ENCODE measurements at regions of chr1 and their contacts with region 1.

Region 1: DNA sequence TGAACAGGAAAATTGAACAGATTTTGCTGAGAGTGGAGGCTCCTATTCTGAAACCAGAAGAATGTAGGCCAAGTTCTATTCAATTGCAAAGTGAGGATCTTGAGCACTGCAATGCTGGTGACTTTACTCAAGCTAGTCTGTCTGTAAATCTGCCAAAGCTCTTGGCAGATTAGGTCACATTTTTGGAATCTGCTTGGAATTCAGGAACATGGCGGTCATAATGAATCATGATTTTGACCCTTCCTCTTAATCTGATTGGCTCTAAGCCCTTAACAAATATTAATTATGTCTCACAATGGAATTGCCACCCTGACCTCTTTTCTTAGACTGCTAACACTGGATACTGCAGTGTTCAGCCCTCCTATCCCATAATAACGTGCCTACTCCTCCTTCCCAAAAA is 7.2 kb upstream of the GNG12 start:
- DNase-seq: no peak
- ATAC-seq: 0 out of 2 replicates have a peak, but pooled peaks have one; percentile 36
- H3K4me3 ChIP-seq: no peak overlapping the region
- H3K27ac ChIP-seq: no peak overlapping the region
- H3K4me1 ChIP-seq: no peaks in the 10 kb centered on the region; the same call in 1 of the 2 replicates
- H3K27me3 ChIP-seq: no peaks in the 10 kb centered on the region
- CTCF ChIP-seq: no peak

Region 2: DNA sequence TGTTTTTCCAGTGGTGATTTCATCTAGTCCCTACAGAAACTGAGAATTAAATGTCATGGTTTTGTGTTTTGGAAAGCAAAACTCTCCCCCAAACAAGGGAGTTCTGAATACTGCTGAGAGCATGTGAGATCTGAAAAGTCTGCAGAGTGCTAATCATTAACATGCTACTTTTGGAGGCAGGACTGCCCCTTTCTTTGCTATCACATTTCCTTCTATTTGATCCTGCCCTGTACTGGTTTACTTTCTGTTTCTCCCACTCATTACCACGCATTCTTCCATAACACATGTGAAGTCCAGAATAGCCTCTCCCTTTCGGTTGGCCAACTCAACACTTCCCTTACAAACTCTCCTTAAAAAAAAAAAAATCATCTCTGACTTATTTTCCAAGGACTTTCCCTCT is 91.8 kb before region 1 on chr1:
- CTCF ChIA-PET with region 1: no interaction called
- POLR2A ChIA-PET with region 1: no interaction called
- in situ Hi-C with region 1: no loop called
- intact Hi-C with region 1: no loop called
- DNase-seq: no peak
- ATAC-seq: peak; percentile 43; the same call in 1 of the 2 replicates
- H3K4me3 ChIP-seq: no peak overlapping the region
- H3K27ac ChIP-seq: peak overlapping the region; percentile 88
- H3K4me1 ChIP-seq: peaks cover 52% of the 10 kb centered on the region
- H3K27me3 ChIP-seq: no peaks in the 10 kb centered on the region
- CTCF ChIP-seq: no peak

Region 3: GRCh38 chr1:67785847-67786753 is 54.3 kb before region 1 on chr1:
- CTCF ChIA-PET with region 1: no interaction called
- POLR2A ChIA-PET with region 1: no interaction called
- in situ Hi-C with region 1: no loop called
- intact Hi-C with region 1: no loop called
- DNase-seq: no peak
- ATAC-seq: no peak
- H3K4me3 ChIP-seq: no peak overlapping the region
- H3K27ac ChIP-seq: no peak overlapping the region
- H3K4me1 ChIP-seq: peaks cover under 1% of the 10 kb centered on the region
- H3K27me3 ChIP-seq: no peaks in the 10 kb centered on the region
- CTCF ChIP-seq: no peak

Region 4: GRCh38 chr1:68049941-68050878 is 209.8 kb after region 1 on chr1 and contains the start of gene DIRAS3:
- CTCF ChIA-PET with region 1: interaction called, 12 read pairs
- POLR2A ChIA-PET with region 1: no interaction called
- in situ Hi-C with region 1: no loop called
- intact Hi-C with region 1: no loop called
- DNase-seq: no peak
- ATAC-seq: no peak
- H3K4me3 ChIP-seq: peak within 1 kb of the TSS in 1 of 2 experiments; percentile 13; a peak in 1 of 4 replicates
- H3K27ac ChIP-seq: no peak within 1 kb of the TSS
- H3K4me1 ChIP-seq: no peaks in the 10 kb centered on the region
- H3K27me3 ChIP-seq: no peaks in the 10 kb centered on the region
- CTCF ChIP-seq: no peak
- total RNA-seq, gene DIRAS3: not detected

Region 5: GRCh38 chr1:68145418-68146126 is 305.1 kb after region 1 on chr1:
- CTCF ChIA-PET with region 1: no interaction called
- POLR2A ChIA-PET with region 1: no interaction called
- in situ Hi-C with region 1: no loop called
- intact Hi-C with region 1: no loop called
- DNase-seq: no peak
- ATAC-seq: no peak
- H3K4me3 ChIP-seq: no peak overlapping the region
- H3K27ac ChIP-seq: no peak overlapping the region
- H3K4me1 ChIP-seq: no peaks in the 10 kb centered on the region
- H3K27me3 ChIP-seq: no peaks in the 10 kb centered on the region
- CTCF ChIP-seq: no peak

Region 6: GRCh38 chr1:68358439-68358838 is 518.0 kb after region 1 on chr1:
- CTCF ChIA-PET with region 1: interaction called, 10 read pairs
- POLR2A ChIA-PET with region 1: no interaction called
- in situ Hi-C with region 1: no loop called
- intact Hi-C with region 1: no loop called
- DNase-seq: no peak
- ATAC-seq: no peak
- H3K4me3 ChIP-seq: no peak overlapping the region
- H3K27ac ChIP-seq: no peak overlapping the region
- H3K4me1 ChIP-seq: no peaks in the 10 kb centered on the region
- H3K27me3 ChIP-seq: no peaks in the 10 kb centered on the region
- CTCF ChIP-seq: no peak